A673 (cell line): ENCODE measurements at regions of chr20 and their contacts with region 1.

Region 1: DNA sequence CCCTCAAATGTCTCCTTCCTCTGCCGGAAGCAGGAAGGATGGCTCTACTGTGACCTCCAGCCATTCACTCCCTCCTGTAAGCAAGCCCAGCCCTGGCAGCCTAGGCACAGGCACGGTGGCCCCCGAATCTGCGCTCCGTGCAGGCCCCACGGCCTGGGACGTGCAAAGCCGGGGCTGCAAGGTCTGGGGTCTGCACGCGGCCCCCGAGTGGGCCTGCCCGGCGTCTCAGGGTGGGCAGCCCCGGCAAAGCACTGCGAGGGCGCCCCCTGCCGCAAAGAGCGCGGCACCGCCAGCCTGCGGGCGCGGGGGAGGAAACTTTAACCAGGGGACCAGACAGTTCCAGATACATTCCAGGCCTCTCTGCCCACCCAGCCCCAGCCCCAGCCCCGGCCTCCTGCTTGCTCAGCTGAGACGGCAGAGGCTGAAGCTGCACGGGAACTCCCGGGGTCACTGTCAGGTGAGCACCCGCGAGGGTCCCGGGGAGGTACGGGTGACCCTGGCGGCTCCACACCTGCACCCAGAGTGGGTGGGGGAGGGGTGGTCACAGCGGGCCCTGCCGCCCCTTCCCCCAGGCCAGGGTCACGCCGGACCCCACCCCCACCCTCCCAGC is 98.8 kb downstream of the ASXL1 start:
- DNase-seq: peak; percentile 68
- H3K4me3 ChIP-seq: peak overlapping the region; percentile 47
- H3K27ac ChIP-seq: no peak overlapping the region
- H3K4me1 ChIP-seq: no peaks in the 10 kb centered on the region
- H3K27me3 ChIP-seq: no peaks in the 10 kb centered on the region
- CTCF ChIP-seq: peak; percentile 91

Region 2: GRCh38 chr20:32445539-32446273 is 11.3 kb before region 1 on chr20:
- CTCF ChIA-PET with region 1: no interaction called
- POLR2A ChIA-PET with region 1: no interaction called
- intact Hi-C with region 1: loop called (anchors 1 kb)
- DNase-seq: no peak
- H3K4me3 ChIP-seq: no peak overlapping the region
- H3K27ac ChIP-seq: no peak overlapping the region
- H3K4me1 ChIP-seq: no peaks in the 10 kb centered on the region
- H3K27me3 ChIP-seq: no peaks in the 10 kb centered on the region
- CTCF ChIP-seq: no peak

Region 3: GRCh38 chr20:32535953-32536823 is 79.2 kb after region 1 on chr20:
- CTCF ChIA-PET with region 1: no interaction called
- POLR2A ChIA-PET with region 1: no interaction called
- intact Hi-C with region 1: no loop called
- DNase-seq: peak; percentile 84
- H3K4me3 ChIP-seq: peak overlapping the region; percentile 39
- H3K27ac ChIP-seq: no peak overlapping the region
- H3K4me1 ChIP-seq: peaks cover 11% of the 10 kb centered on the region
- H3K27me3 ChIP-seq: no peaks in the 10 kb centered on the region
- CTCF ChIP-seq: no peak